ENCODE measurements at regions of chr2 and their contacts with region 1.

Region 1: DNA sequence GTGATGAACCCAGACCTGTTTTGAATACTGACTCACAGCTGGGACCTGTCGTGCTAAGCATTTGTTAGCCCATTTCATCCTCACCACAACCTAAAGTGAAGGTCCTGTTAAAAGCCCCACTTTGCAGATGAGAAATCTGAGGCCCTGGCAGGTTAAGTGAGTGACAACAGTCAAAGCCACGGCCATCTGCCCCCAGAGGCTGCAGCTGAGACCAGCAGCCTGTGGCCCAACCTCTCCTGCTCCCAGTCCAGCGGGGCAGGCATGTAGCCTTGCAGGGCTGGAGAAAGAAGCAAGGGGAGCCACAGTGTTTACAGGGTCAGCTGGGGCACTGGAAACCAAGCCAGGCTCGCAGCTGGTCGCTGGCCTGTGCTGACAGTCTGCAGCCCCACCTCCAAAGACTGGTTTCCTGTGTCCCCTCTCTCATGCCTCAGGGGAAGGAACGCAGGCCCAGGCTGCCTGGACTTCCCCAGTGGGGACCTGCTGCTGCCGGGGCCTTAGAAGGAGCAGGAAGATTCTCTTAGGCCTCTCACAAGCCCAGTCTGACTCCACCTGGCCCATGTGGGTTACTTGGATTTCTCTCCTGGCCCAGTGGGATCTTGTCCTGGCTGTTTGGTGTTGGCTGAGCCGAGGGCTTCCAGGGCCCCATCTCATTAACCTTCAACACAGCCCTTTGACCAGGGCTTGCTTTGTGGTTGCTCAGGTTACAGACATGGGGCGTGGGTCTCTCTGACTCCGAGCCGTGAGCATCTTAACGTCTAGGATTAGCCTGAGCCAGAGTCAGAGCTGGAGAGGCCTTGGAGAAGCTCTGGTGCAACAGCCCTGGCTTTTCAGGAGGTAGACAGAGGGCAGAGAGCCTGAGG is 1.7 kb downstream of the INPP5D start:
- DNase-seq: peak; percentile 70
- ATAC-seq: peak; percentile 51
- H3K4me3 Mint-ChIP-seq: peak overlapping the region; percentile 96
- H3K27ac Mint-ChIP-seq: peak overlapping the region; percentile 90
- H3K4me1 Mint-ChIP-seq: peaks cover 40% of the 10 kb centered on the region
- H3K27me3 Mint-ChIP-seq: no peaks in the 10 kb centered on the region

Region 2: DNA sequence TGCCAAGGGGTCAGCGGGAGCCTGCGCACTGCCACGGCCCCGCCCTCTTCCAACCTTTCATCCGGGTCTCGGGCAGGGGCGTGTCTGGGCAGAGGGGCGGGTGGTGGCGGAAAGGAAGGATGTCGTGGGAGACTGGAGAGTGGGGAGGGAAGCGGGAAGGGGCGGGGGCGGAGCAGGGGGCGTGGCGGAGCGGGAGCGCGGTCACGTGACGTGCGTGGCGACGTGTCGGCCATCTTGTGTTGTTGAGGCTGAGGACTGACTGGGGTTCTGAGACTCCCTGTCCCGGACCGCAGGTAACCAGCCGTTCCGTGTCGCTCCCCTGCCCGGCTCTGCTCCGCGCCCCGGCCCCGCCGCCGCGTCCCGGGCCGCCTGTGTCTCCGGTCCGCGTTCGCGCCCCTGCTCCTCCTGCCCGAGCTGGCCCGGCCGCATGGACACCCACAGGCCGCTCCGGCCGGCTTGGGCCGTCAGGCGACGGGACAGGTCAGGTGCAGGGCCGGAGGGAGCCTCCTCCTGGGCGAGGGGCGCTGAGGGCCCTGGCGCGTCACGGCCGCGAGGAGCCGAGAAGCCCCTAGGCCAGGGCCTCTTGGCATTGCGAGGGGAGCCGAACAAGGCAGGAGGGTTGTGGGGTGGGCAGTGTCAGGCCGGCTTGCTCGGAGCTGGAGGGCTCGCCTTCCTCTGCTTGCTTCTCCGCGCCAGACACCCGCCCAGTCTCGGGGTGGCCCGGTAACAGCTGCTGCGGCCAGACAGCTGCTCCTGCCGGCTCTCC is 364.5 kb before region 1 on chr2 and contains the start of gene GIGYF2:
- CTCF ChIA-PET with region 1: no interaction called
- POLR2A ChIA-PET with region 1: no interaction called
- intact Hi-C with region 1: loop called in 1 of 2 experiments (anchors 1 kb)
- DNase-seq: peak; percentile 98
- ATAC-seq: peak; percentile 92
- H3K4me3 Mint-ChIP-seq: peak within 1 kb of the TSS; percentile 99
- H3K27ac Mint-ChIP-seq: peak within 1 kb of the TSS; percentile 87
- H3K4me1 Mint-ChIP-seq: peaks cover 36% of the 10 kb centered on the region
- H3K27me3 Mint-ChIP-seq: no peaks in the 10 kb centered on the region
- total RNA-seq, gene GIGYF2: 51.1 to 51.9 TPM

Region 3: DNA sequence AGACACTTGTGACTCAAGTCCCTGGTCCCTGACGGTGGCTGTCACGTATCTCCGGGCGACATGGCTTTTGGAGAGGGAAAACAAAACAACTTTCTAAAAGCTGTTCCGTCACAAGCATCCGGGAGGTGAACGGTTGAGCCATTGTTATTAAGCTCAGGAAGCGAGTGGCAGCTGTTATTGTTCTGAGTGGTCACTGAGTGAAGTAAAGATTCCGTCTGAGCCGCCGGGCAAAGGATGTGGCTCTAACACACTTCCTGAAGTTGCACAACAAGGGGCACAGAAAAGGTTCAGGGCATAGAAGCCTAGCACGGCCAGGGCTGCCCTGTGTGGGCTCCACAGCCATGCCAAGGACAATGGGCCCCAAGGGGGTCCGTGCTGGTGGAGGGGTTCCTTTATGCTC is 22.7 kb after region 1 on chr2:
- CTCF ChIA-PET with region 1: interaction called, 22 read pairs
- POLR2A ChIA-PET with region 1: interaction called, 29 read pairs
- intact Hi-C with region 1: loop called (anchors 1 kb)
- DNase-seq: peak; percentile 72
- ATAC-seq: peak; percentile 5
- H3K4me3 Mint-ChIP-seq: peak overlapping the region; percentile 50
- H3K27ac Mint-ChIP-seq: peak overlapping the region; percentile 87
- H3K4me1 Mint-ChIP-seq: peaks cover 79% of the 10 kb centered on the region
- H3K27me3 Mint-ChIP-seq: no peaks in the 10 kb centered on the region

Region 4: DNA sequence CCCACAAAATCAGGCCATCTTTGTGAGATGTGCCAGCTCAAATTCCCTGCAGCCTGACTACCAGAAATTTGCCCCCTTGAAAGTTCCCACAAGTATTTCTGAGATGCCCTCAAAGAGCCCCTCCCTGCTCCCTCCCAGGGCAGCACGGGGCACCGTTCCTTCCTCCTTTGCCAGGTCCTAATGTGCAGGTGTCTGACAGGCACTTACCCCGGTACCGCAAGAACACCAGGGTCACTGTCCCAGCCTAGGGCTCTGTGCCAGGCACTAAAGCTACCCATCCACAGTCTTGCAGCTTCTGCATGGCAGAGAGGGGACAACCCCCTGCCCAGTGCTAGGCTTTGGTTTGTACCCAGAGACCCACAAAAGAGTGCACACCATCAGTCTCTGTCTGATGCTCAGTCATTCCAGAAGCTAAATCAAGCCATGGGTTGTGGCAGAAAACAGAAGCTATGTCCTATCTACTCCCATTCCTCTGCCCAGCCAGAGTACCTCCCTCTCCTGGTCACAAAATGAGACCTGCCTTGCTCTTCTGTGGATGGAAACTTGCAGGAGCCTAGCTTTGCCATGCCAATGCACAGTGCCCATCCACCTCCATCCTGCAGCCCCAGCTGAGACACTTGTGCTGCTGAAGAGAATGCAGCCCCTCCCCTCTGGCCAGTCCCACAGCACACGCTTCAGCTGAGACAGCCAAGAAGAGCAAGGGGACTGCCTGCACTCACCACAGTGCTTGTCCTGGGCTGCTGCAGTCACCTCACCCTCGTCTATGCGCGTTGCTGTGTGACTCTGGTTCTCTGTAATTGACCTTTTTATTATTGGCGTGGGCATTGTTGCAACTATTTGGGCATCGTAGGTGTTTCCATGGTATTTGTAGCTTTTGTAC is 47.0 kb after region 1 on chr2:
- CTCF ChIA-PET with region 1: interaction called, 8 read pairs
- POLR2A ChIA-PET with region 1: interaction called, 11 read pairs
- intact Hi-C with region 1: no loop called
- DNase-seq: no peak
- ATAC-seq: peak; percentile 44
- H3K4me3 Mint-ChIP-seq: no peak overlapping the region
- H3K27ac Mint-ChIP-seq: peak overlapping the region; percentile 30
- H3K4me1 Mint-ChIP-seq: peaks cover 61% of the 10 kb centered on the region
- H3K27me3 Mint-ChIP-seq: no peaks in the 10 kb centered on the region

Region 5: GRCh38 chr2:233280114-233280693 is 218.4 kb after region 1 on chr2:
- CTCF ChIA-PET with region 1: no interaction called
- POLR2A ChIA-PET with region 1: interaction called, 20 read pairs
- intact Hi-C with region 1: no loop called
- DNase-seq: no peak
- ATAC-seq: no peak
- H3K4me3 Mint-ChIP-seq: no peak overlapping the region
- H3K27ac Mint-ChIP-seq: peak overlapping the region; percentile 32
- H3K4me1 Mint-ChIP-seq: peaks cover 18% of the 10 kb centered on the region
- H3K27me3 Mint-ChIP-seq: no peaks in the 10 kb centered on the region

Measured in activated CD4-positive, alpha-beta T cell treated with anti-CD3 and anti-CD28 coated beads for 36 hours (primary cell).